ENCODE measurements at regions of chr6 and their contacts with region 1.

Region 1: DNA sequence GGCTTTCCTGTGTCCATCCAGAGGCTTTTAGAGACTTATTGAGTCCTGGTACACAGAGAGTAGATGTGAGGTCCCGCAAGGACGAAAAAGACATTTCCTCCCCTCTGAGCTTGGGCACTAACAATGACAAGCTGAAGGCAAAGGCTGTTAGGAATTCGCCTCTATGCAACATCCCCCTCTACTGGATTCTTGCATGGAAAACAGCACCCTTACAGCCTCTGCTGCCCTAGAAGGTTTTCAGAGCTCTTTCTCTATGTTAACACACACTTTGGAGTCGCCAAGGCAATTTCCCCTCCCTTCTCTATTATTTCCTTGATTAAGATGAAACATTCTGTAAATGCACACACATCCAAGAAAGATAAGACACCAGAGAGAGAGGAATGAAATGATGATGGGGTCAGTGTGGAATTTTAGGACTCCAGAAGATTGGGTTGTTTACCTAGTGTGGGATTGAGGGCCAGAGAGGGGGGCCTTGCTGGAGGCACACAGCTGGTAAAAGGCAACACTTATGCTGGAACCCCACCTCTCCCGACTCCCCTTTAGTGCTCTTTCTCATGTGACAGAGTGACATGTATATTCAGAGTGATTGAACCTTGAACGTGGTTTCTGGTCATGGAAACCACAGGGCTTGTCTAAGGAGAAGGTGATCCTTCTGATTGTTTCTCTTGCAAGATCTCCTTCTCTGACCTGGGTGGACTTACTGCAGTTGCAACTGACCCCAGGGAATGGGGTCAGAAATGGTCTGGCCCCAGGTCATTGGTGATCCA is 300.7 kb downstream of the CLIC5 start:
- DNase-seq: peak; percentile 49
- H3K4me3 Mint-ChIP-seq: peak overlapping the region; percentile 28
- H3K27ac Mint-ChIP-seq: peak overlapping the region; percentile 94
- H3K4me1 Mint-ChIP-seq: peaks cover 79% of the 10 kb centered on the region
- H3K27me3 Mint-ChIP-seq: no peaks in the 10 kb centered on the region

Region 2: GRCh38 chr6:44642870-44643529 is 1071.9 kb before region 1 on chr6:
- intact Hi-C with region 1: loop called (anchors 1 kb)
- DNase-seq: peak; percentile 39
- H3K4me3 Mint-ChIP-seq: no peak overlapping the region
- H3K27ac Mint-ChIP-seq: peak overlapping the region; percentile 91
- H3K4me1 Mint-ChIP-seq: peaks cover 31% of the 10 kb centered on the region
- H3K27me3 Mint-ChIP-seq: no peaks in the 10 kb centered on the region

Region 3: DNA sequence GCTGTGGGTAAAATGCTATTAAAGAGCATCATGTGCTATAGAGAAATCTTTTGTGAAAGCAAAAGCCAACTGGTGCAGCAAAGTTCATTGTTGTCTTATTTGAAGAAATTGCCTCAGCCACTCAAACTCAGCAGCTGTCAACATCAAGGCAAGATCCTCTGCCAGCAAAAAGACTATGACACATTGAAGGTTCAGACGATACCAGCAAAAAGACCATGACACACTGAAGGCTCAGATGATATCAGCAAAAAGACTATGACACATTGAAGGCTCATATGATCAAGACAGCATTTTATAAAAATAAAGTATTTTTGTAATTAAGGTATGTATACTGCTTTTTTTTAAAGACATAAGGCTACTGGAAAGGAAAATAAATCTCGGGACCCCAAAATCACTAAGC is 505.2 kb before region 1 on chr6:
- intact Hi-C with region 1: loop called (anchors 10 kb)
- DNase-seq: no peak
- H3K4me3 Mint-ChIP-seq: no peak overlapping the region
- H3K27ac Mint-ChIP-seq: peak overlapping the region; percentile 47
- H3K4me1 Mint-ChIP-seq: peaks cover 50% of the 10 kb centered on the region
- H3K27me3 Mint-ChIP-seq: no peaks in the 10 kb centered on the region

Region 4: GRCh38 chr6:45543298-45544235 is 171.4 kb before region 1 on chr6:
- intact Hi-C with region 1: loop called (anchors 5 kb)
- DNase-seq: no peak
- H3K4me3 Mint-ChIP-seq: no peak overlapping the region
- H3K27ac Mint-ChIP-seq: peak overlapping the region; percentile 24
- H3K4me1 Mint-ChIP-seq: peaks cover 68% of the 10 kb centered on the region
- H3K27me3 Mint-ChIP-seq: no peaks in the 10 kb centered on the region

Region 5: DNA sequence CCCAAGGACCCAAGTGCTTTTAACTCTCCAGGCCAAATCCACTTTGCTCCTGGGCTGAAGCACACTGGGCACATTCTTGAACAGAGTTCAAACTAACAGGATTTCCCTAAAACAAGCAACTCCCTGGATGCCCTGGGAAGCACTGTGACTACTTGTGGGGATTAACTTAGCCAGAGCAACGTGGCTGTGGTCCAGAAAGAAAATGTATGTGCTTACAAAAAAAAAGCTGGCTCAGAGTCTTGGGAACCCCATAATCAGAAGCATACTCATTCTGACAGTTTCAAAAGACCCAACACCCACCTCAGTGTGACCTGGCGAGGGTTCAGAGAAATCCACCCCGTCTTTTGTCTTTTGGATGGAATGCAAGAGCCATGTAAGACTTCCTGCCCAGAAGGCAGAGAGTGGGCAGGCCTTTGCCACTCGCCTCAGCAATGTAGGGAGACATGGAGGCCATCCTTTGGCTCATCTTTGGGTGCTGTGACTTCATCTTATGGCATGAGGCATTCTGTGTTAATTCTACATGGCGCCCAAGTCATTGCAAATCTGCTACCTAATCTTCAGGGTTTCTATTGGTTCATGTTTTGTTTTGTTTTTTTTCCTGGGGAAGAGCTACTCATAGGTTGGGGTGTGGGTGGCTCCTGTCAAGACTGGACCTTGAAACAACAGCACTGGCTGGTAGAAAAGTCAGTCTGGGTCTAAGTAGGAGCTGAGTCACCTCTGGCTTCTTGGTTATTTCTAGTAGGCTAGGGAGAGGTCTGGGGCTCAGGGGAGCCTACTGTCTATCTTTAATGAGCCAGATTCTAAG is 88.6 kb before region 1 on chr6:
- intact Hi-C with region 1: loop called (anchors 1 kb)
- DNase-seq: no peak
- H3K4me3 Mint-ChIP-seq: no peak overlapping the region
- H3K27ac Mint-ChIP-seq: peak overlapping the region; percentile 86
- H3K4me1 Mint-ChIP-seq: peaks cover 61% of the 10 kb centered on the region
- H3K27me3 Mint-ChIP-seq: no peaks in the 10 kb centered on the region

Region 6: GRCh38 chr6:45822246-45822812 is 107.4 kb after region 1 on chr6:
- intact Hi-C with region 1: loop called (anchors 1 kb)
- DNase-seq: no peak
- H3K4me3 Mint-ChIP-seq: peak overlapping the region; percentile 47
- H3K27ac Mint-ChIP-seq: peak overlapping the region; percentile 89
- H3K4me1 Mint-ChIP-seq: peaks cover 40% of the 10 kb centered on the region
- H3K27me3 Mint-ChIP-seq: no peaks in the 10 kb centered on the region